ENCODE measurements at regions of chr3 and their contacts with region 1.

Region 1: GRCh38 chr3:148513167-148513566 is 184.5 kb upstream of the AGTR1 start:
- DNase-seq: peak; percentile 75
- H3K4me3 ChIP-seq: no peak overlapping the region
- H3K27ac ChIP-seq: peak overlapping the region; percentile 79
- H3K4me1 ChIP-seq: peaks cover 14% of the 10 kb centered on the region
- H3K27me3 ChIP-seq: no peaks in the 10 kb centered on the region
- CTCF ChIP-seq: no peak
- POLR2A ChIP-seq: no peak

Region 2: DNA sequence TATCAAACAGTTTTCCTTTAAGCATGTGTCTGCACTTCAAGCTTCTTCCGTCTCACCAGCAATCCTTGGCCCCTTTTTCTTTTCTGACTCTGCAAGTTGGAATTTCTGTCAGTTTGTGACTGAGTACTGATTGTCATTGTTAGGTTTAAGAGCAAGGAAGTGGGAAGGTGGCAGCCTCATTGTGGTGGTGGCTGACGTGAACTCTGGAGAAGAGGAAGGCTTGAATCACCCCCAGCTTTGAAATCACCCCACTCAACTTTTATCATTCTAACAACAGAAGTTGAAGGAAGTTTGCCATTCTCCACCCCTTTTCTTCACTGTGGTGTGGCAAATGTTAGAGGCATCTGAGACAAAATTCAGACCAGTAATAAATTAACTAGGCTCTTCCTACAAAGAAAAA is 47.0 kb before region 1 on chr3:
- CTCF ChIA-PET with region 1: no interaction called
- POLR2A ChIA-PET with region 1: no interaction called
- dilution Hi-C with region 1: no loop called
- intact Hi-C with region 1: loop called (anchors 1 kb)
- DNase-seq: peak; percentile 56
- H3K4me3 ChIP-seq: no peak overlapping the region
- H3K27ac ChIP-seq: peak overlapping the region; percentile 69
- H3K4me1 ChIP-seq: peaks cover 24% of the 10 kb centered on the region
- H3K27me3 ChIP-seq: no peaks in the 10 kb centered on the region
- CTCF ChIP-seq: no peak
- POLR2A ChIP-seq: no peak

Region 3: GRCh38 chr3:148494451-148494850 is 18.7 kb before region 1 on chr3:
- CTCF ChIA-PET with region 1: no interaction called
- POLR2A ChIA-PET with region 1: no interaction called
- dilution Hi-C with region 1: no loop called
- intact Hi-C with region 1: no loop called
- DNase-seq: no peak
- H3K4me3 ChIP-seq: no peak overlapping the region
- H3K27ac ChIP-seq: no peak overlapping the region
- H3K4me1 ChIP-seq: no peaks in the 10 kb centered on the region
- H3K27me3 ChIP-seq: peaks cover 0 to 2% of the 10 kb centered on the region in 2 experiments
- CTCF ChIP-seq: no peak
- POLR2A ChIP-seq: no peak

Region 4: DNA sequence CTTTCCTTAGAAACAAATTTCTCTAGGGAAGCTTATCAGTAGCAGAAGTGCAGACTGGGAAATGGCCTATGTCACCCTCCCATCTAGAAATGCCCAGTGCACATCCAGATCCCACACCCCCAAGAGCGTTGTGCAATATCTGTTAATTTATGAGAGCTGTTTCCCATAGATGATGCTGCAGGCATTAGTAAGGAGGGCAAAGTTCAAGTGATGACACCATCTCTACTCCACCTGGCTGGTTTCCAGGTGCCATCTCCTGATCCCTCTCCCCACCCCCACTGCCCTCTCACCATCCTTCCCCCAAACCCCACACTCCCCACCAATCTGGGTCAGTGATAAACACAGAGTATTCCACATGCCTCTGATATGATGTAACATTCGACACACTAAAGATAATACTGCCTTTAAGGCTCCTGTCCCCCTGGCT is 223.9 kb after region 1 on chr3:
- CTCF ChIA-PET with region 1: no interaction called
- POLR2A ChIA-PET with region 1: no interaction called
- dilution Hi-C with region 1: no loop called
- intact Hi-C with region 1: no loop called
- DNase-seq: no peak
- H3K4me3 ChIP-seq: no peak overlapping the region
- H3K27ac ChIP-seq: no peak overlapping the region
- H3K4me1 ChIP-seq: no peaks in the 10 kb centered on the region
- H3K27me3 ChIP-seq: no peaks in the 10 kb centered on the region
- CTCF ChIP-seq: no peak
- POLR2A ChIP-seq: no peak